MCF 10A (cell line): ENCODE measurements at regions of chr2 and their contacts with region 1.

Region 1: GRCh38 chr2:233353769-233354499 is at the start of gene DGKD:
- DNase-seq: peak; percentile 45
- H3K4me3 Mint-ChIP-seq: peak within 1 kb of the TSS; percentile 75
- H3K27ac Mint-ChIP-seq: peak within 1 kb of the TSS; percentile 0
- H3K4me1 Mint-ChIP-seq: peaks cover 65% of the 10 kb centered on the region
- H3K27me3 Mint-ChIP-seq: no peaks in the 10 kb centered on the region
- CTCF ChIP-seq: peak; percentile 24
- total RNA-seq, gene DGKD: 55.7 and 59.1 TPM in 2 replicates

Region 2: GRCh38 chr2:233289648-233290047 is 64.3 kb before region 1 on chr2:
- CTCF ChIA-PET with region 1: no interaction called
- POLR2A ChIA-PET with region 1: no interaction called
- intact Hi-C with region 1: loop called (anchors 5 kb)
- DNase-seq: no peak
- H3K4me3 Mint-ChIP-seq: no peak overlapping the region
- H3K27ac Mint-ChIP-seq: peak overlapping the region; percentile 39
- H3K4me1 Mint-ChIP-seq: no peaks in the 10 kb centered on the region
- H3K27me3 Mint-ChIP-seq: no peaks in the 10 kb centered on the region
- CTCF ChIP-seq: no peak